Heart left ventricle (tissue), 16 donors: ENCODE measurements at regions of chr20 and their contacts with region 1.

Region 1: GRCh38 chr20:21235484-21236445 is 67.4 kb upstream of the XRN2 start:
- DNase-seq: peak; percentile 36 to 71 (median 44)
- ATAC-seq: peak; percentile 44 to 82 (median 72)
- H3K4me3 ChIP-seq: no peak overlapping the region
- H3K27ac ChIP-seq: no peak overlapping the region
- H3K4me1 ChIP-seq: peaks cover 0 to 8% (median 3%) of the 10 kb centered on the region in 12 donors
- H3K27me3 ChIP-seq: no peaks in the 10 kb centered on the region
- CTCF ChIP-seq: peak; percentile 64 to 86 (median 72)
- POLR2A ChIP-seq: no peak

Region 2: GRCh38 chr20:20837574-20838021 is 398.2 kb before region 1 on chr20:
- intact Hi-C with region 1: loop called in 3 of 10 experiments (anchors 1 to 10 kb)
- DNase-seq: peak in 3 of 5 donors; percentile 32 to 40 (median 39)
- ATAC-seq: peak in 2 of 4 donors; percentile 49 to 54
- H3K4me3 ChIP-seq: peak overlapping the region in 8 of 12 donors; percentile 18 to 43 (median 20)
- H3K27ac ChIP-seq: no peak overlapping the region
- H3K4me1 ChIP-seq: peaks cover 0 to 3% (median 0%) of the 10 kb centered on the region in 12 donors
- H3K27me3 ChIP-seq: peaks cover 0 to 45% (median 2%) of the 10 kb centered on the region in 9 donors
- CTCF ChIP-seq: peak; percentile 45 to 80 (median 68)
- POLR2A ChIP-seq: no peak

Region 3: GRCh38 chr20:21303061-21303871 is 67.5 kb after region 1 on chr20 and contains the start of gene XRN2:
- intact Hi-C with region 1: loop called in 1 of 10 experiments (anchors 5 kb)
- DNase-seq: peak; percentile 96 to 98 (median 97)
- ATAC-seq: peak; percentile 91 to 99 (median 98)
- H3K4me3 ChIP-seq: peak within 1 kb of the TSS; percentile 75 to 100 (median 92)
- H3K27ac ChIP-seq: peak within 1 kb of the TSS; percentile 90 to 100 (median 96)
- H3K4me1 ChIP-seq: peaks cover 0 to 25% (median 16%) of the 10 kb centered on the region in 12 donors
- H3K27me3 ChIP-seq: no peaks in the 10 kb centered on the region
- CTCF ChIP-seq: peak in 3 of 12 donors; percentile 9 to 41 (median 34)
- POLR2A ChIP-seq: peak in 1 of 2 donors; percentile 74
- total RNA-seq, gene XRN2: 30.9 to 48.3 (median 33.2) TPM

Region 4: GRCh38 chr20:21499641-21500040 is 263.9 kb after region 1 on chr20:
- intact Hi-C with region 1: loop called in 4 of 10 experiments (anchors 2 kb)
- DNase-seq: no peak
- ATAC-seq: no peak
- H3K4me3 ChIP-seq: no peak overlapping the region
- H3K27ac ChIP-seq: no peak overlapping the region
- H3K4me1 ChIP-seq: no peaks in the 10 kb centered on the region
- H3K27me3 ChIP-seq: peaks cover 15 to 91% (median 28%) of the 10 kb centered on the region in 9 donors
- CTCF ChIP-seq: no peak
- POLR2A ChIP-seq: no peak

Region 5: GRCh38 chr20:21571841-21572690 is 336.3 kb after region 1 on chr20:
- intact Hi-C with region 1: loop called in 8 of 10 experiments (anchors 2 to 10 kb)
- DNase-seq: no peak
- ATAC-seq: no peak
- H3K4me3 ChIP-seq: no peak overlapping the region
- H3K27ac ChIP-seq: no peak overlapping the region
- H3K4me1 ChIP-seq: no peaks in the 10 kb centered on the region
- H3K27me3 ChIP-seq: peaks cover 0 to 41% (median 17%) of the 10 kb centered on the region in 9 donors
- CTCF ChIP-seq: peak; percentile 74 to 89 (median 84)
- POLR2A ChIP-seq: no peak